Activated CD4-positive, alpha-beta memory T cell treated with anti-CD3 and anti-CD28 coated beads, Interleukin-2, amount 10 ng/mL, durations not matched to agents 7 days and 5 days (primary cell): ENCODE measurements at regions of chr9 and their contacts with region 1.

Region 1: GRCh38 chr9:1009101-1009707 is 32.7 kb downstream of the DMRT3 start:
- DNase-seq: peak; percentile 79
- H3K4me3 Mint-ChIP-seq: no peak overlapping the region
- H3K27ac Mint-ChIP-seq: no peak overlapping the region
- H3K4me1 Mint-ChIP-seq: peaks cover 16% of the 10 kb centered on the region
- H3K27me3 Mint-ChIP-seq: peaks cover 16% of the 10 kb centered on the region

Region 2: DNA sequence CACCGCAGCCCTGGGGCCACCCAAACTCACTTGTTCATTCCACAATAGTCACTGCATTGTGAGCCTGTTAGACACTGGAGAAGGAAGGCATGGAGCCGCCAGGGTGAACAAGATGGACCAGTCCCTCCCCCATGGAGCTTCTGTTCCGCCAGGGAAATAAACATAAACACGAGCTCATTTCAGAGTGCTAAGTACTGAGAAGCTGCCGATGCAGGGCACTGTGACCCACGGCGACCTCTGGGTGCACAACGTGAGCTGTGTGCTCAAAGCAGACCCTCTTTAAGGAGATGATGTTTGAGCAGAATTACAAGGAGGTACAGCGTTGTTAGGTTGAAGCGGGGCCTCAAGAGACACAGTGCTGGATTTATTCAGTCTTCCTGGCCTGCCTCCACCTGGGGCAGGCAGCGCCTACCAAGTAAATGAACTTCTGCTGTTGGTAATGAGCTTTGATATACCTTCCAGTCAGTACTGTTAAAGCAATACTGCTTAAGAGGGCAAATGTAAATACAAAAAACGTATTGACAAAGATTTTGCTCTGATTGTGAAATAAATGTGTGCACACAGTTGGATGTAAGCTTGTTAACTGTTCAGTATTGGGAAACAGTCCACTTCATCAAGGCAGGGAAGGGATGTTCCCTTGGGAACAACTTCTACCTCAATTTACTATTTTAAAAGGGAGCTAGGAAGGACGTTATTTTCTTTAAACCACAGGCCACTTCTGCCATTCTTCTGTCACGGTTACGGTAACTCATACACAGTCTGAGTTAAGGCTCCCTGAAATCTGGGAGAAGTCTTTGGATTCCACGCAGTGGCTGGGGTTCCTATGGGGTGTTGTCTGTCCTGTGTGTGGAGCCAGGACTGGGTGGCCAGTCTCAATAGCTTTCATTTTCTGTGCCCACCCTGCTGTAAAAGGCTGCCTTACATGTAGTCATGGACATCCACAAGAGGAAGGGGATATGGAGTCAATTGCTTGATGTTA is 216.6 kb before region 1 on chr9:
- CTCF ChIA-PET with region 1: no interaction called
- POLR2A ChIA-PET with region 1: no interaction called
- DNase-seq: no peak
- H3K4me3 Mint-ChIP-seq: no peak overlapping the region
- H3K27ac Mint-ChIP-seq: no peak overlapping the region
- H3K4me1 Mint-ChIP-seq: no peaks in the 10 kb centered on the region
- H3K27me3 Mint-ChIP-seq: peaks cover 12% of the 10 kb centered on the region

Region 3: GRCh38 chr9:893843-894420 is 115.3 kb before region 1 on chr9:
- CTCF ChIA-PET with region 1: interaction called, 78 read pairs
- POLR2A ChIA-PET with region 1: no interaction called
- DNase-seq: peak; percentile 54
- H3K4me3 Mint-ChIP-seq: no peak overlapping the region
- H3K27ac Mint-ChIP-seq: no peak overlapping the region
- H3K4me1 Mint-ChIP-seq: peaks cover 8% of the 10 kb centered on the region
- H3K27me3 Mint-ChIP-seq: peaks cover 11% of the 10 kb centered on the region

Region 4: DNA sequence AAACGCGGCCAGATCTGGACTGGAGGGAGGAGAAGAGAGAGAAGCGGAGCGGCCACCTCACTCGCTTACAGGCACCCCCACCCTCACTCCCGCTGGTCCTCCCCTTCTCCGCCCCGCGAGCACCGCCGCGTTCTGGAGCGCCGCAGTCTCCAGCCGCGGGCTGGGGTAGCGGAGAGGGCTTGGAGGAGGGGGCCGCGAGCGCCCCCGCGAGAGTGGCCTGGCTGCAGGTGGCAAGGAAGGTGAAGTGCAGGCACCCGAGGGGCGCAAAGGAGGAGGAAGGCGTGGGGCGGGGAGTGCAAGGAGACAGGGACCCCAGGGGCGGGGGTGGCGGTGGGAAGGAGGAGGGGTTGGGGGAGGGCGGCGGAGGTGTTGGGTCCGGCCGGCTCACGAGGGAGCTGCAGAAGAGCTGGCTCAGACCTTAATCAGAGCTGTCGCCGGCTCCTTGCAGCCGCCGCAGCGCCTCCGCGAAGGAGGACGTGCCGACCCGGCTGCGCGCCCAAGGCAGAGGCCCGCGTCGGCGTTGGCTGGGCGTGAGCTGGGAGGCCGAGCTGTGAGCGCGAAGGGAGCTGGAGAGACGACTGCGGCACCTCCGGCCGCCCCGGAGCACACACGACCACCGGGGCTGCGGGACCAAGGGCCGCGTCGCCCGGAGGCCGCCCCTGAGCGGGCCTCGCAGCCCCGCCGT is 32.8 kb before region 1 on chr9 and contains the start of gene DMRT3:
- CTCF ChIA-PET with region 1: interaction called, 15 read pairs
- POLR2A ChIA-PET with region 1: no interaction called
- DNase-seq: no peak
- H3K4me3 Mint-ChIP-seq: no peak within 1 kb of the TSS
- H3K27ac Mint-ChIP-seq: no peak within 1 kb of the TSS
- H3K4me1 Mint-ChIP-seq: peaks cover 7% of the 10 kb centered on the region
- H3K27me3 Mint-ChIP-seq: peaks cover 80% of the 10 kb centered on the region
- total RNA-seq, gene DMRT3: not detected

Region 5: GRCh38 chr9:994005-994404 is 15.2 kb before region 1 on chr9:
- CTCF ChIA-PET with region 1: interaction called, 15 read pairs
- POLR2A ChIA-PET with region 1: no interaction called
- DNase-seq: no peak
- H3K4me3 Mint-ChIP-seq: no peak overlapping the region
- H3K27ac Mint-ChIP-seq: no peak overlapping the region
- H3K4me1 Mint-ChIP-seq: peaks cover 8% of the 10 kb centered on the region
- H3K27me3 Mint-ChIP-seq: peaks cover 23% of the 10 kb centered on the region

Region 6: DNA sequence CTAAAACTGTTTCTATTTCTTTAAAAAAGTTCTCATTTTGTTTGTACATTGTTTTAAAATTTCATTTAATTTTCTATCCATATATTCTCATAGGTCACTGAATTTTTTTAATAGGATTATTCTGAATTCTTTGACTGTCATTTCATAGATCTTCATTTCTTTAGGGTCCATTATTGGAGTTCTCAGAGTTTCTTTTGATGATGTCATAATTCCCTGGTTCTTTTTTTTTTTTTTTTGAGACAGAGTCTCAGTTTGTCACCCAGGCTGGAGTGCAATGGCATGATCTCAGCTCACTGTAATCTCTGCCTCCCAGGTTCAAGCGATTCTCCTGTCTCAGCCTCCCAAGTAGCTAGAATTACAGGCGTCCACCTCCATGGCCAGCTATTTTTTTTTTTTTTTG is 130.9 kb after region 1 on chr9:
- CTCF ChIA-PET with region 1: no interaction called
- POLR2A ChIA-PET with region 1: no interaction called
- DNase-seq: no peak
- H3K4me3 Mint-ChIP-seq: no peak overlapping the region
- H3K27ac Mint-ChIP-seq: no peak overlapping the region
- H3K4me1 Mint-ChIP-seq: no peaks in the 10 kb centered on the region
- H3K27me3 Mint-ChIP-seq: no peaks in the 10 kb centered on the region